Activated naive CD4-positive, alpha-beta T cell treated with anti-CD3 and anti-CD28 coated beads for 36 hours (primary cell): ENCODE measurements at regions of chr15 and their contacts with region 1.

Region 1: DNA sequence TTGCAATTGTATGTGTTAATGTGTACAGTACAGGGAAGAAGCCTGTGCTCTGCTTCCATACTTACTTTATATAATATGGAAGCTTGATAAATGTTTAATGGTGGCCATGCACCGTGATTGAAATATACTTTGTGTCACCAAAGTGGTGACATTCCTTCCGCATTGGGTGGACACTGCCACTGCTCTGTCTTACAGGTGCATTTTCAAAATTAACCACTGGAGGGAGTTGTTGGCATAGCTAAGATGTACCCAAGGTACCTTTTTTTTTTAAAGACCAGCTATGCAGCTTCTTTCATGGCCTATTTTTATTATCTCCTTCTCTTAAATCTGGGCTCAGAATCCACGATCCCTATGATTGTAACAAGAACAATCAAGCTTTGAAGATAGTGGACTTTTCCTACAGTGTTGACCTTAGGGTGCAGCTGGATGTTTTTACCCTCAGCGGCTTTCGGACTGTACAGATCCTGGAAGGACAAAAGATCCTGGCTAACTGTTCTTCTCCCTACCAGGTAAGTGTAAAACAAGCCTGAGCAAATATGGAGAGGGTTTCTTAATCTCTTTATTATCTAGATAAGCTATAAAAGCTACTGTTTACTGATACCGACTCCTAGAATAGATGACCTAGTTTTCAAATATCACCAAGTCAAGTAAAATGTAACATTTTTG is 21.6 kb upstream of the PAK6 start:
- DNase-seq: peak; percentile 47
- H3K4me3 Mint-ChIP-seq: no peak overlapping the region
- H3K27ac Mint-ChIP-seq: no peak overlapping the region
- H3K4me1 Mint-ChIP-seq: no peaks in the 10 kb centered on the region
- H3K27me3 Mint-ChIP-seq: no peaks in the 10 kb centered on the region

Region 2: GRCh38 chr15:40064221-40064894 is 152.9 kb before region 1 on chr15:
- CTCF ChIA-PET with region 1: no interaction called
- intact Hi-C with region 1: no loop called
- DNase-seq: peak; percentile 58
- H3K4me3 Mint-ChIP-seq: no peak overlapping the region
- H3K27ac Mint-ChIP-seq: peak overlapping the region; percentile 64
- H3K4me1 Mint-ChIP-seq: peaks cover 17% of the 10 kb centered on the region
- H3K27me3 Mint-ChIP-seq: no peaks in the 10 kb centered on the region

Region 3: DNA sequence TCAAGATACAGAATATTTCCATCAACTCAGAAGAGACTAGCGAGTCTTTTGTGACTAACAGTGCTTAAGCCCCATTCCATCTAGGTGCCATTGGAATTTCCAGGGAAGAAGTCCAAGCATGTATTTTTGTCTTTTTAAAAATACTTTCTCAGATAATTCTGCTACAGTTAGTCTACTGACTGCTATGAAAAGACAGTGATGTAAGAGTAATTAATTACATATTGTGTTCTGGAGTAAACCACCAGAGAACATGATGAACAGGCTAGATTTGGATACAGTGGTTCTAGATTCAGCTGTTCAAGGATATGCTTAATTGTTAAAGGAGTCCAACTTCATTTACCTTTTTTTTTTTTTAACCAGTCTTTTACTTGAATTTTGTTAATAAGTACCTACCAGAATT is 13.2 kb before region 1 on chr15:
- CTCF ChIA-PET with region 1: interaction called, 12 read pairs
- intact Hi-C with region 1: no loop called
- DNase-seq: no peak
- H3K4me3 Mint-ChIP-seq: no peak overlapping the region
- H3K27ac Mint-ChIP-seq: no peak overlapping the region
- H3K4me1 Mint-ChIP-seq: no peaks in the 10 kb centered on the region
- H3K27me3 Mint-ChIP-seq: no peaks in the 10 kb centered on the region

Region 4: GRCh38 chr15:40238532-40239403 is 21.5 kb after region 1 on chr15 and contains the start of gene PAK6:
- CTCF ChIA-PET with region 1: interaction called, 26 read pairs
- intact Hi-C with region 1: no loop called
- DNase-seq: peak; percentile 64
- H3K4me3 Mint-ChIP-seq: no peak within 1 kb of the TSS
- H3K27ac Mint-ChIP-seq: no peak within 1 kb of the TSS
- H3K4me1 Mint-ChIP-seq: peaks cover 11% of the 10 kb centered on the region
- H3K27me3 Mint-ChIP-seq: peaks cover 14% of the 10 kb centered on the region
- total RNA-seq, gene PAK6: not detected

Region 5: GRCh38 chr15:40313531-40314398 is 96.5 kb after region 1 on chr15:
- CTCF ChIA-PET with region 1: interaction called, 11 read pairs
- intact Hi-C with region 1: no loop called
- DNase-seq: peak; percentile 62
- H3K4me3 Mint-ChIP-seq: no peak overlapping the region
- H3K27ac Mint-ChIP-seq: no peak overlapping the region
- H3K4me1 Mint-ChIP-seq: peaks cover 25% of the 10 kb centered on the region
- H3K27me3 Mint-ChIP-seq: no peaks in the 10 kb centered on the region